ENCODE measurements at regions of chr16 and their contacts with region 1.

Region 1: DNA sequence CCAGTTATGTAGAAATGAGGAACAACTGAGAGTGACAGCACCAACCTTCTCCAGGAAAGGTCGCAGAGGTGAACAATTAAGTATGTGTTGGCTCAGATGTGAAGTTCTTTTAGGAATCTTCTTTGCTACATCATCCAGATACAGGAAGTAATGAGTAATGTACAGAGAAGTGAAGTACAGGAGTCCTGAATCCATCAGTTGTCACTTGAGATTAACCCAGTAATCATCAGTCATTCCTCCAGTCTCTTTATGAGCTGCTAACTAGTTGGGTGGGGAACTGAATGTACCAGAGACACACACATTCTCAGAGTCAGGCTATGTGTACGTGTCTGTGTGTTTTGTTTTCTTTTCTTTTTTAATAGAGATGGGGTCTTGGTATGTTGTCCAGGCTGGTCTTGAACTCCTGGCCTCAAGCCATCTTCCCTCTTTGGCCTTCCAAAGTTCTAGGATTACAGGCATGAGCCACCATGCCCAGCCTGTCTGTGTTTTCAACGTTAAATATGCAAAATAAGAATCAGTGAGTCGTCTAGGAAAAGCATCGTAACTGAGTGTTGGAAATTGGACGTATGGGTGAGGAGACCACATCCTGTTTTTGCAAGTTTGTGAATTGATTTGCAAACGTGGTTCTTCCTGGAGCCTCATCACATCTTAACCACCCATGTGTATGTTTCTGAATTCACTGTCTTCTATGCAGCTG is 19.9 kb downstream of the ZNF200 start:
- DNase-seq: peak; percentile 75 to 86 (median 83)
- H3K4me3 ChIP-seq: peak overlapping the region in 1 of 2 donors; percentile 37
- H3K4me3 Mint-ChIP-seq: peak overlapping the region; percentile 56 to 84 (median 81)
- H3K27ac ChIP-seq: peak overlapping the region; percentile 50
- H3K27ac Mint-ChIP-seq: peak overlapping the region; percentile 95 to 100 (median 97)
- H3K4me1 ChIP-seq: peaks cover 34% of the 10 kb centered on the region
- H3K4me1 Mint-ChIP-seq: peaks cover 30 to 41% (median 35%) of the 10 kb centered on the region in 4 donors
- H3K27me3 ChIP-seq: no peaks in the 10 kb centered on the region
- H3K27me3 Mint-ChIP-seq: no peaks in the 10 kb centered on the region

Region 2: DNA sequence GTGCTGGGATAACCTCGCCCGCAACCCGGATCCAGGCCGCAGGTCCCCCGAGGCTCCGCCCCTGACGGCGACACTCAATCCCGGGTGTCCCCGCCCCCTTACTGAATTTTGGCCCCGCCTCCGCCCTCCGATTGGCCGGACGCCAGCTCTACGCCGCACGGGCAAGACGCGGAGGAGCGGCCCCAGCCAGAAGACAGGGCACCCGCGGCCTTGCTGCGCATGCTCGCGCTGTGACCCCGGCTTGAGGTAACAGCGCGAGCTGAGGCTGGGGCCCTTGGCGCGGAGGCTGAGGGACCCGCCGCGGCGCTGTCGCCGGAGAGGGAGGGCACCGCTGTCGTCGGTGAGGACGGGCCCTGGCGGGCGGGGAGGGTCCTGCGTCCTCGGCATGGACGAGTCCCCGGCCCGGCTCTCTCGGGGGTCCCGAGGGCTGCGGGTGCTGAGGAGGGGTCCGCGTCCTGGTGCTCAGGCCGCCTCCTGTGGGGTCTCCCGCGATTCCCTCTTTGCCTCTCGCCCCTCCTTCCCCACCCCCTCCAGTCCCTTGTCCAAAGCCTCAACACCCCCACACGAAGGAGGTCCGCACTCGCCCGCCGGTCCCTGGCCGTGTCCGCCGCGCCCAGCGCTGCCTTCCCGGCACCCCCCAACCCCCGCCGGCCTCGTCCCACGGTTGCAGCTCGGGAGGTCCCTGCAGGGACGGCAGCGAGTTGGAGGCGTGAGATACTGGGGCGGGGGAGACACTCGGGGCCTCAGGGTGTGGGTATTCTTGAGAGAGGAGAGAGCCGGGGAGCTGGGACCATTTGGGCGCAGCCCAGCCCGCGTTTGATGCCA is 331.8 kb before region 1 on chr16 and contains the start of gene FLYWCH2:
- CTCF ChIA-PET with region 1: no interaction called
- POLR2A ChIA-PET with region 1: no interaction called
- intact Hi-C with region 1: no loop called
- DNase-seq: peak; percentile 99 to 100 (median 100)
- H3K4me3 ChIP-seq: peak within 1 kb of the TSS; percentile 61 to 88
- H3K4me3 Mint-ChIP-seq: peak within 1 kb of the TSS; percentile 90 to 95 (median 92)
- H3K27ac ChIP-seq: peak within 1 kb of the TSS; percentile 88
- H3K27ac Mint-ChIP-seq: peak within 1 kb of the TSS; percentile 98 to 99 (median 98)
- H3K4me1 ChIP-seq: peaks cover 7% of the 10 kb centered on the region
- H3K4me1 Mint-ChIP-seq: peaks cover 8 to 25% (median 16%) of the 10 kb centered on the region in 4 donors
- H3K27me3 ChIP-seq: no peaks in the 10 kb centered on the region
- H3K27me3 Mint-ChIP-seq: no peaks in the 10 kb centered on the region
- total RNA-seq, gene FLYWCH2: 24.1 to 27.1 TPM

Region 3: DNA sequence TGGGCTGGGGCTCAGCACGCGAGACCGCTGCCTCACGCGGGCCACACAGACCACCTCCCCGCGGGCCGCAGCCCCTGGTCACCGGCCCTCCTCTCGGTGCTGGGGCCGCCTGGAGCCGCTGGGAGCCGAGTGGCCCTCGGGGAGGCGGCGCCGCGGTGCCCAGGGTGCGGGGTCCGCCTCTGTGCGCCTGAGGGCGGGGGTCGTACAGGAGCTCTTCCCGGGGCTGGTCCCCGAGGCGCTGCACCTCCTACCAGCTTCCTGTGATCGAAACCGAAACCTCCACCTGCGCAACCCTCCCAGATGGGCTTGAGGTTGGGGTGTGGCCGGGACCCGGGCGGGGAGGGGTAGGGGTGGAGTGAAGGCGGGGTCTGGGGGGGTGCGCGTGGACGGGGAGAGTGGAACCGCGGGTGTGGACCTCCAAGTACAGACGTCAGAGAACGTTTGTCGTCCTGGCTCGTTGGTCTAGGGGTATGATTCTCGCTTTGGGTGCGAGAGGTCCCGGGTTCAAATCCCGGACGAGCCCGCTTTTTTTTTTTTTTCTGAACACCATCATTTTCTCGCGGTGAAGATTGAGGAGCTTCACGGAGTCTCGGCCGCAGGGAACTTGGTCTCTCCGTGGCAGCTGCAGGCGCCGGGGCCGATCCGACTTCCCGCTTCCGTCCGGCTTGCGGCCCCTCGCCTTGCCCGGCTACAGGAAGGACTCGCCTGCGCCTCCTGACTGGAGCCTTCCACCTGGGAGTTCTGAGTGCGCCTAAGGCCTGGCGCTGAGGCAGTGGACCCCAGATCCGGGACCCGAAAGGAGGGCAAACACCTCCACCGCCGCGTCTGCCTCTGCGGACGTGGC is 56.4 kb before region 1 on chr16:
- CTCF ChIA-PET with region 1: interaction called, 3 read pairs
- POLR2A ChIA-PET with region 1: interaction called, 10 read pairs
- intact Hi-C with region 1: no loop called
- DNase-seq: peak; percentile 92 to 98 (median 94)
- H3K4me3 ChIP-seq: peak overlapping the region; percentile 65 to 66
- H3K4me3 Mint-ChIP-seq: peak overlapping the region; percentile 83 to 96 (median 92)
- H3K27ac ChIP-seq: peak overlapping the region; percentile 62
- H3K27ac Mint-ChIP-seq: peak overlapping the region; percentile 92 to 100 (median 96)
- H3K4me1 ChIP-seq: peaks cover 25% of the 10 kb centered on the region
- H3K4me1 Mint-ChIP-seq: peaks cover 11 to 36% (median 25%) of the 10 kb centered on the region in 4 donors
- H3K27me3 ChIP-seq: no peaks in the 10 kb centered on the region
- H3K27me3 Mint-ChIP-seq: peaks cover 0 to 2% of the 10 kb centered on the region in 2 donors

Region 4: GRCh38 chr16:3188925-3189825 is 25.9 kb before region 1 on chr16:
- CTCF ChIA-PET with region 1: no interaction called
- POLR2A ChIA-PET with region 1: interaction called, 15 read pairs
- intact Hi-C with region 1: loop called (anchors 2 kb)
- DNase-seq: peak in 3 of 5 donors; percentile 44 to 45 (median 44)
- H3K4me3 ChIP-seq: peak overlapping the region; percentile 23 to 44
- H3K4me3 Mint-ChIP-seq: peak overlapping the region; percentile 48 to 84 (median 82)
- H3K27ac ChIP-seq: no peak overlapping the region
- H3K27ac Mint-ChIP-seq: peak overlapping the region; percentile 42 to 90 (median 54)
- H3K4me1 ChIP-seq: peaks cover 44% of the 10 kb centered on the region
- H3K4me1 Mint-ChIP-seq: peaks cover 18 to 49% (median 32%) of the 10 kb centered on the region in 4 donors
- H3K27me3 ChIP-seq: peaks cover 58% of the 10 kb centered on the region
- H3K27me3 Mint-ChIP-seq: peaks cover 45 to 51% of the 10 kb centered on the region in 2 donors

Region 5: GRCh38 chr16:3234543-3235541 is 19.8 kb after region 1 on chr16 and contains the start of gene ZNF200:
- CTCF ChIA-PET with region 1: interaction called, 3 read pairs
- POLR2A ChIA-PET with region 1: interaction called, 46 read pairs
- intact Hi-C with region 1: loop called (anchors 1 kb)
- DNase-seq: peak; percentile 92 to 96 (median 95)
- H3K4me3 ChIP-seq: peak within 1 kb of the TSS; percentile 91 to 94
- H3K4me3 Mint-ChIP-seq: peak within 1 kb of the TSS; percentile 93 to 98 (median 96)
- H3K27ac ChIP-seq: peak within 1 kb of the TSS; percentile 88
- H3K27ac Mint-ChIP-seq: peak within 1 kb of the TSS; percentile 96 to 99 (median 98)
- H3K4me1 ChIP-seq: peaks cover 29% of the 10 kb centered on the region
- H3K4me1 Mint-ChIP-seq: peaks cover 17 to 41% (median 23%) of the 10 kb centered on the region in 4 donors
- H3K27me3 ChIP-seq: no peaks in the 10 kb centered on the region
- H3K27me3 Mint-ChIP-seq: no peaks in the 10 kb centered on the region
- total RNA-seq, gene ZNF200: 27.7 to 29.2 TPM

Measured in CD4-positive, alpha-beta memory T cell (primary cell).